Activated T-helper 1 cell treated with anti-CD3 and anti-CD28 coated beads, Interleukin-12 subunit alpha, Interleukin-12 subunit beta, Interleukin-2, Interleukin-4 antibody, amounts not matched to agents 30 ng/mL and 10 ng/mL and 1 ng/mL, durations not matched to agents 14 hours and 24 hours and 36 hours (primary cell): ENCODE measurements at regions of chr3 and their contacts with region 1.

Region 1: GRCh38 chr3:169662132-169662842 is 1.2 kb downstream of the MECOM start:
- DNase-seq: no peak
- H3K4me3 Mint-ChIP-seq: peak overlapping the region; percentile 83
- H3K27ac Mint-ChIP-seq: no peak overlapping the region
- H3K4me1 Mint-ChIP-seq: peaks cover 56% of the 10 kb centered on the region
- H3K27me3 Mint-ChIP-seq: peaks cover 88% of the 10 kb centered on the region

Region 2: GRCh38 chr3:169278092-169278491 is 384.2 kb before region 1 on chr3:
- intact Hi-C with region 1: no loop called
- DNase-seq: no peak
- H3K4me3 Mint-ChIP-seq: no peak overlapping the region
- H3K27ac Mint-ChIP-seq: no peak overlapping the region
- H3K4me1 Mint-ChIP-seq: no peaks in the 10 kb centered on the region
- H3K27me3 Mint-ChIP-seq: no peaks in the 10 kb centered on the region

Region 3: DNA sequence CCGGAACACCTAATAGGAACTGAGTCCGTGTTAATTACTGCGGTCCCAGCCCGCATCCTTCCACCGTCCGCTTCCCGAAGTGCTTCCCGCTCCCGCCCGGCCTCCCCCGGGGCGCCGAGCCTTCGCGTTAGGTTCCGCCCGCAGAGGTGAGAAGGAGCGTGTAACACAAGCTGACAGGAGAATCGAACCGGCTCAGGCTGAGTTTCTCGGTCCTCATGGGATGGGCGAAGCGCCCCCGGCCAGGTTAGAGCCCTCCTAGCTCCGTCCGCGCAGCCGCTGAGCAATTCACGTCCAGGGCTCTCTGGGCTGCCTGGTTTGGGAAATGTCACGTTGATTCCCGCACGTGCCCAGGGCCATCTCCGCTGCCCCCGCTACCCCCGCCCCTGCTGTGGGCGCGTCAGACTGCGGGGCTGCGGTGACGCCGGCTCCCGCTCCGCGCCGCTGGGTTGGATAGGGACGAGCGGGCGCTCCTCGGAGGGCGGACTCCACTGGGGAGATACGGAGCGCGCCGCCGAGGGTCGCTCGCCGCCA is 757.3 kb after region 1 on chr3:
- intact Hi-C with region 1: loop called (anchors 5 kb)
- DNase-seq: no peak
- H3K4me3 Mint-ChIP-seq: no peak overlapping the region
- H3K27ac Mint-ChIP-seq: no peak overlapping the region
- H3K4me1 Mint-ChIP-seq: peaks cover 10% of the 10 kb centered on the region
- H3K27me3 Mint-ChIP-seq: peaks cover 49% of the 10 kb centered on the region

Region 4: GRCh38 chr3:170584585-170585007 is 922.3 kb after region 1 on chr3:
- intact Hi-C with region 1: loop called (anchors 2 kb)
- DNase-seq: peak; percentile 11
- H3K4me3 Mint-ChIP-seq: no peak overlapping the region
- H3K27ac Mint-ChIP-seq: no peak overlapping the region
- H3K4me1 Mint-ChIP-seq: no peaks in the 10 kb centered on the region
- H3K27me3 Mint-ChIP-seq: peaks cover 38% of the 10 kb centered on the region